ENCODE measurements at regions of chr11 and their contacts with region 1.

Region 1: DNA sequence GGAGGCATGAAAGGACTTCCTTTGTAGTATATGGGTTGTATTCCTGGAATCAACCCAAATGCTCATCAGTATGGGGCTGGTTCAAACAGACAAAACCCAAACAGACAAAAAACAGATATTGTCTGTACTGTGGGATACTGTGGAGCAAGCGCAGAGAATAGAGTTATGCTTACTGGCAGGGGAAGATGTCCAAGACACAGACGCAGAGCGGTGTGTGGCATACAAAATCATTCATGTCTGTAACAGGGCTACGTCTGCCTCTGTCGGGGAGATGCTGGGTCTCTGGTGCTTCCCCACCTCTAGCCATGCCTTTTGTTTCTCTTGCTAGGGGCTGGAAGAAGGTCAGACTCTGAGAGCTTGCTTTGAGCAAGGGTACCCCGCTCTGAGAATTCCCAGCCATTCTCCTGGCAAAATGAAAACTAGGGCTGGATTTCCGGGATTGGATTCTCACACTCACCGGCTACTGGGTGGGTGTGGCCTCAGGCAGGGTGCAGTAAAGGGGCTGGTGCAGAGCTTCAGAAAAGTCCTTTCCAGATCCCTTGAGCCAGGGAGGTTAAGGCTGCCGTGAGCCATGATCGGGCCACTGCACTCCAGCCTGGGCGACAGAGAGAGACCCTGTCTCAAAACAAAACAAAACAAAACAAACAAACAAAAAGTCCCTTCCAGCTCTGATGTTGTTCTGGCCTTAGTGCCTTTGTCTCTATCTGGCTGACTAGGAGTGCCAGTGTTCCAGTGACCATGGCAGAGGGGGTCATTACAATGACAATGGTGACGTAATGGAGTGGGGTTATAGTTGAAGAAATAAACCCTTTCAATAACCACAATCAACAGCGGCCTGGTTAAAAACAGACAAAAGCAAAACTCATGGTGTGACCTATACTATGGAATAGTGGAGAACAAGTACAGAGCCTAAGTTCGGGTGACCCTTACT is 2.9 kb upstream of the ABCC8 start:
- DNase-seq: peak in 7 of 10 donors; percentile 39 to 68 (median 50)
- H3K4me3 ChIP-seq: peak overlapping the region in 57 of 59 donors; percentile 18 to 68 (median 48)
- H3K27ac ChIP-seq: peak overlapping the region in 11 of 59 donors; percentile 27 to 78 (median 46)
- H3K27me3 ChIP-seq: peaks cover 0 to 24% (median 0%) of the 10 kb centered on the region in 45 donors
- CTCF ChIP-seq: no peak

Region 2: GRCh38 chr11:16843294-16843693 is 636.3 kb before region 1 on chr11:
- intact Hi-C with region 1: no loop called
- DNase-seq: no peak
- H3K4me3 ChIP-seq: no peak overlapping the region
- H3K27ac ChIP-seq: no peak overlapping the region
- H3K27me3 ChIP-seq: no peaks in the 10 kb centered on the region
- CTCF ChIP-seq: no peak

Region 3: GRCh38 chr11:17403982-17404759 is 75.4 kb before region 1 on chr11:
- intact Hi-C with region 1: loop called in 1 of 2 experiments (anchors 5 kb)
- DNase-seq: no peak
- H3K4me3 ChIP-seq: no peak overlapping the region
- H3K27ac ChIP-seq: peak overlapping the region in 1 of 59 donors; percentile 45
- H3K27me3 ChIP-seq: no peaks in the 10 kb centered on the region
- CTCF ChIP-seq: no peak

Region 4: GRCh38 chr11:17695454-17696441 is 216.2 kb after region 1 on chr11:
- intact Hi-C with region 1: no loop called
- DNase-seq: no peak
- H3K4me3 ChIP-seq: peak overlapping the region in 20 of 59 donors; percentile 6 to 53 (median 30)
- H3K27ac ChIP-seq: no peak overlapping the region
- H3K27me3 ChIP-seq: peaks cover 0 to 59% (median 32%) of the 10 kb centered on the region in 45 donors
- CTCF ChIP-seq: no peak

Measured in dorsolateral prefrontal cortex (tissue), 120 donors.